Dendritic cell treated with granulocyte-macrophage colony-stimulating factor and Interleukin-4, amounts not matched to agents 40 ng/mL and 50 ng/mL, for 4 days (primary cell): ENCODE measurements at regions of chr15 and their contacts with region 1.

Region 1: DNA sequence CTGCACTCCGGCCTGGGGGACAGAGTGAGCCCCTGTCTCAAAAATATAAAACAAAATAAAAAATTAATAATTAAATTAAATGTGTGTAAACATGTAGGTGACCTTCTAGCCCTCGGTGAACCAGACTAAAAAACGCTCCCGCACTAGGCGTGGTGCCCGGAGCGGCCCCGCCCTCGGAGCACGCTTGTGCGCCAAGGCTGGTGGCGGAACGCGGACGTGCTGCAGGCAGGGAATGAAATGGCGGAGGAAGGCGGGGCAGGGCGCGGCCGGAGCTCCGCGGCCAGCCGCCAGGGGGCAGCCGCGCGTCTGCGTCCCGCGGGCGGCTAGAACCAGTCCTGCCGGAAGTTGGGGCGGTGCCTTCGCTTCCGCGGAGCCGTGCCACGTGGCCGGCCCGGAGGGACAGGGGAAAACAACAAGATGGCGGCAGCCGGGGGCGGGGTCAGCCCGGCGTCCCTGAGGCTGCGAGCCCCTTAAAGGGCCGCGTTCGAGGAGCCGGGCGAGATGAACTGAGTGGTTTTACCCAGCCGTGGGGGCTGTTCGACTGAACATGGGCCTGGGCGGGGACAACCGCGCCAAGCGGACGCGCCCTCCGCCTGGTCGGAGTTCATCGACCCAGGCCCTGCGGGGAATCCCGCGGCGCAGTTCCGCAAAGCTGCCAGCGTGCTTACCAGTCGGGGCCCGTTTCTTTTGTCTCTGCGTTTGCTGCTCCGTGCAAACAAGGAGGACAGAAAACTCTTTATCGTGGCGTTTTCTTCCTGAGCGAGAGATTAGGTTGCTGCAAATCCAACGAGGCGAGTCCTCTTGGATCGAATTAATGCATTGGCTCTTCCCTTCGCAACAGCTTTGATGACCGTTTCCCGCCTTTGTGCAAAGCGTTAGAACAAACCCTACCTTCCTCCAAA is 90.9 kb upstream of the CHD2 start:
- H3K4me3 Mint-ChIP-seq: peak overlapping the region; percentile 79
- H3K27ac Mint-ChIP-seq: peak overlapping the region; percentile 99
- H3K4me1 Mint-ChIP-seq: peaks cover 34% of the 10 kb centered on the region
- H3K27me3 Mint-ChIP-seq: no peaks in the 10 kb centered on the region

Region 2: GRCh38 chr15:92780843-92781242 is 28.4 kb before region 1 on chr15:
- intact Hi-C with region 1: no loop called
- H3K4me3 Mint-ChIP-seq: no peak overlapping the region
- H3K27ac Mint-ChIP-seq: no peak overlapping the region
- H3K4me1 Mint-ChIP-seq: peaks cover 8% of the 10 kb centered on the region
- H3K27me3 Mint-ChIP-seq: no peaks in the 10 kb centered on the region

Region 3: DNA sequence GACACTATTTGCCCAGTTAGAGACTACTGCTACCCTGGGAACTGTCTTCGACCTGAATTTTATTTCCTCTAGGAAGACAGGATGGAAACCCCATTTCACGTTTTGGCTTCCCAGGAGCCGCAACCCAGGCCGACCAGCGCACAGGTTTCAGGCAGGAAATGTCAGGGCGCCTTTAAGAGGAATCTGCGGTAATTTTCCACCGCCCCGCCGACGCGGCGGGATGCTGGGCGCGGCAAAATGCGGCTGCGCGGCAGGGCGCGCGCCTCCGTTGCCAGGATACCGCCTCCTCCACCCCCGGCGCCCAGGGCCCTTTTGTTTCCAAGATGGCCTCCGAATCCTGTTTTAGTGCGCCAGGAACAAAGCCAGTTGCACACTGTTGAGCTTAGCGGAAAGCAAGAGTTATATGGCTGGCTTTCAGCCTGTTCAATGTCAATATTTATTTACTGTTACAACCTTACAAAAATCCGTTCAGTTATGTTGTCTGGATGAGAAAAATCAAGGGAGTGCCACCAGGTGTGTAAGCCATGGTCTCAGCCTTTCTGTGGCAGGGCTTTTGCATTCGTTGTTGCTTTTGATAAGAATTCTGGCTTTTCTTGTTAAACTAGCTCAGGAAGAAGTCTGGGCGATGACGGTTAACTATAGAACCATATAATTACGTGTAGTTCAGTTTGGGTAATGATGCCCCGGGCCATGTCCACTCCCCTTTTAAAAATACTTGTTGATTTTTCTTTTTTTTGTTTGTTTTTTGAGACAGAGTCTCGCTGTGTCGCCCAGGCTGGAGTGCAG is 11.2 kb after region 1 on chr15:
- intact Hi-C with region 1: loop called (anchors 1 kb)
- H3K4me3 Mint-ChIP-seq: peak overlapping the region; percentile 76
- H3K27ac Mint-ChIP-seq: peak overlapping the region; percentile 97
- H3K4me1 Mint-ChIP-seq: peaks cover 41% of the 10 kb centered on the region
- H3K27me3 Mint-ChIP-seq: no peaks in the 10 kb centered on the region

Region 4: DNA sequence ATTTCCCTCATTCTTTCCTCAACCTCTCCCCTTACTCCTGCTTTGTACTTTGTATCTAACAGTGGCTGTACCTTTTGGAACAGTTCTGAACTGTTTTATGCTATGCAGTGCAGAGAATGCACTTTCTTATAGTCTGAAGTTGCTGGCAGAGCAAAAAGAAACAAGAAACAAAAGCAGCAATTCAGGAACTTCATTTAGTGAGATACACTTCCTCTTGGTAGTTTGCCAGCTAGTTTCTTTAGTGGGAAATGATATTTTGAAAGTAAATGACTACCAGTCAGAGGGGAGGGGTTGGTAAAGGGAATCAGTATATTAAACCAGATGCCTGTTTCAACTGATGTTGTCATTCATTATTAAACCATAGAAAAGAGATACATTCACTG is 35.9 kb after region 1 on chr15:
- intact Hi-C with region 1: loop called (anchors 5 kb)
- H3K4me3 Mint-ChIP-seq: peak overlapping the region; percentile 60
- H3K27ac Mint-ChIP-seq: peak overlapping the region; percentile 96
- H3K4me1 Mint-ChIP-seq: peaks cover 48% of the 10 kb centered on the region
- H3K27me3 Mint-ChIP-seq: no peaks in the 10 kb centered on the region

Region 5: GRCh38 chr15:92881802-92882696 is 72.8 kb after region 1 on chr15:
- intact Hi-C with region 1: loop called (anchors 1 kb)
- H3K4me3 Mint-ChIP-seq: peak overlapping the region; percentile 80
- H3K27ac Mint-ChIP-seq: peak overlapping the region; percentile 98
- H3K4me1 Mint-ChIP-seq: peaks cover 46% of the 10 kb centered on the region
- H3K27me3 Mint-ChIP-seq: peaks cover 3% of the 10 kb centered on the region

Region 6: DNA sequence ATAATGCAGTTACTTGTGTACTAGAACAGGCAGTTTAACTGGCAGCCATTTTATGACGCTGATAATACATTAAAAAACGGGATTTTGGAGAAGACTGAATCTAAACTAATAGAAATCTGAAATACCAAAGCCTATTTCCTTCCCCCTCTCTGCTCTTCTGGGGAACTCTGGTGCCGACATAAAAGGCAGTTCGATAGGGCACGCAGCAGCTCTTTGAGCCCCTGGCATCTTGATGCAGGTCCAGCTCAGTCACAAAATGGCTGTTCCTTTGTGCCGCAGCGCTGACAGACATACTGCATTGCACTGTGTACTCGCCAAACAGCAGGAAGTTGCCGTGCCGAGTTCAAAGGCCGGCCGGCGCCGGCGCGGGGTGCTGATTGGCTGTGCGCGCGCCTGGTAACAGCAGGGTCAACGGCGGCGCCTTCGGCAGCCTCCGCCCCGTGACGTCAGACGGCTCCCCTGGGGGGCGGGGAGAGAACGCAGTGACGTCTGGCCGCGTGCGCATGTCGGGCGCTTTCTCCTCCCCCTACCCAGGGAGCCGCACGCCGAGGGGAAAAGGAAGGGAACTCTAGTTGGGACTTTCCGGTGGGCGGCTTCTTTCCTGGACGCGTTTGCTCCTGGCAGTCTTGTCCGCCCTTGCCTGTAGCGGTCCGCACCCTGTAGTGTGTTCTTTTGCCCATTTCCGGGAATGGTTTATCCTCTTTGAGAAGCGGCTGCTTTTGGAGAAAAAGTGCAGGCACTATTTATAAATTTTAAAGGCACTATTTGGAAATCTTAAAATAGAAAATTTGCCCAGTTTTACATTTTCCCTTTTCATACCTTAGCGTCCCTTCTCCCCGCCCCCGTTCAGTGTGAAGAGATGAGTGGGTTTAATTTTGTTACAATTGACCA is 95.0 kb after region 1 on chr15:
- intact Hi-C with region 1: loop called (anchors 1 kb)
- H3K4me3 Mint-ChIP-seq: peak overlapping the region; percentile 83
- H3K27ac Mint-ChIP-seq: peak overlapping the region; percentile 96
- H3K4me1 Mint-ChIP-seq: peaks cover 48% of the 10 kb centered on the region
- H3K27me3 Mint-ChIP-seq: no peaks in the 10 kb centered on the region